ENCODE measurements at regions of chr7 and their contacts with region 1.

Region 1: DNA sequence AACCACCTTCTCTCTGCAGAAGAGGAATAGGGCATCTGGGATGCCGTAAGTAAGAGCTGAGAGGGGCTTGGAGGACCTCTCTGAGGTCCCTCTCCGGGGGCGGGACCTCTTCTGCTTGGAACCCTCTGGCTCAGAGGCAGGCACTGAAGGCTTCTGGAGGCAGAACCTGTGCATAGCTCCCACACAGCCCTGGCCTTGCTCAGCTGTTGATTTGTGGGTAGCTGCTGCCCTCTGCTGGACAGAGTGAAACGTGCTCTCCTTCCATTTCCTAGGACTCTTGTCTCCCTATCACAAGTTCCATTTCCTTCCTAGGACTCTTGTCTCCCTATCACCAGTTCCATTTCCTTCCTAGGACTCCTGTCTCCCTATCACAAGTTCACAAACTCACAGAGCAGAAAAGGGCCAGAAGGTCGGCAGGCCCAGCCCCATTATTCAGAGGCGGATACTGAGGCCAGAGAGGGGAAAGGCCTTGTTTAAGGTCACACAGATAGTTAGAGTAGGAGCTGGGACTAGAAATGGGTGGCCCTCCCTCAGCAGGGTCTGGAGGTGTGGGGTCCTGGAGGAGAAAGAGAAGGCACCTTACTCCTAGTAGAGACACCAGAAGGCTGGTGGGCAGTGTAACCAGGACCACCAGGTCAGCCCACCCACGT is 30.3 kb upstream of the GARS1 start:
- DNase-seq: peak; percentile 78 to 90
- H3K4me3 ChIP-seq: no peak overlapping the region
- H3K27ac ChIP-seq: no peak overlapping the region
- H3K4me1 ChIP-seq: peaks cover 2 to 7% (median 5%) of the 10 kb centered on the region in 4 experiments; a peak in 5 of 7 replicates
- H3K27me3 ChIP-seq: no peaks in the 10 kb centered on the region
- CTCF ChIP-seq: peak; percentile 79 to 97 (median 90)
- EP300 ChIP-seq: no peak
- POLR2A ChIP-seq: no peak
- RAD21 ChIP-seq: peak; percentile 97 to 99

Region 2: GRCh38 chr7:30276203-30276900 is 288.0 kb before region 1 on chr7:
- CTCF ChIA-PET with region 1: interaction called, 82 read pairs
- POLR2A ChIA-PET with region 1: interaction called, 4 read pairs
- DNase-seq: peak; percentile 15 to 63
- H3K4me3 ChIP-seq: no peak overlapping the region
- H3K27ac ChIP-seq: no peak overlapping the region
- H3K4me1 ChIP-seq: peaks cover 0 to 1% (median 0%) of the 10 kb centered on the region in 4 experiments; a peak in 1 of 7 replicates
- H3K27me3 ChIP-seq: no peaks in the 10 kb centered on the region
- CTCF ChIP-seq: peak; percentile 58 to 89 (median 87)
- EP300 ChIP-seq: no peak
- POLR2A ChIP-seq: no peak
- RAD21 ChIP-seq: peak; percentile 95 to 96

Region 3: DNA sequence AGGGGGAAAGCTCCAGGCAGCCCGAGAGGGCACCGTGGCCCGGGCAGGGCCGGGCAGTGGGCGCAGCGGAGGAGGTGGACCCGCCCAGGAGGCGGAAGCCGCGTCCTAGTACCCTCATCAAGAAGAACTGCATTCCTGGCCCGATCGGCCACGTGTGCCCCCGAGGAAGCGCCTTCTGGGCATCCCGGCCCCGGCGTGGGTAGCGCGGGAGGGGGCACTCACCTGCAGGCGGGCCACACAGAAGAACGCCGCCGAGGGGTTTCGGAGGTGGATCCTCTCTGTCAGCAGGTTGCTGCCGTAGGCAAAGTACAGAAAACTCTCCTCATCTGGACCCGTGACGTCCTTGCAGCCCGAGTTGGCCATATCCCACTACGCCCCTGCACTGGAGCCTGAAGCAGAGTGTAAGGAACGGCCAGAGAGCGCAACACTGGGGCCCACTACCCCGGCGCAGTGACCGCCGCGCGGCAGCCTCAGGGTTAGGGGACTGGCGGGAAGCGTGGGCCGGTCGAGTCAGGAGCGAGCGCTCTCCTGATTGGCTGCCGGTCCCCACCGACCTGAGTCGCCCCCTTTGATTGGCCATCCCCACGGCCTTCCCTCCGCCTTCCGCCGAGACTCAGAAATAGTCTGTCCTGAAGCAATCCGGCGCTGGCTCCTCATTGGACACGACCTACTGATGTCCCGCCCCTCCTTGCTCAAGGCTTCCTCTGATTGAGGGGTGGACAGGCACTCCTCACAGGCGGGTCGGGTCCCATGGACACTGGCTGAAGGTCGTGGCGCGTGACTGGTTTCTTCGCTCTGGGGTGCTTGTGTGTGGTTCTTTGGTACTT is 59.8 kb before region 1 on chr7 and contains the start of gene GGCT:
- CTCF ChIA-PET with region 1: interaction called, 63 read pairs
- POLR2A ChIA-PET with region 1: no interaction called
- DNase-seq: peak; percentile 94 to 95
- H3K4me3 ChIP-seq: peak within 1 kb of the TSS; percentile 85 to 95 (median 90)
- H3K27ac ChIP-seq: peak within 1 kb of the TSS; percentile 86
- H3K4me1 ChIP-seq: peaks cover 0 to 6% (median 3%) of the 10 kb centered on the region in 4 experiments; a peak in 4 of 7 replicates
- H3K27me3 ChIP-seq: no peaks in the 10 kb centered on the region
- CTCF ChIP-seq: no peak
- EP300 ChIP-seq: no peak
- POLR2A ChIP-seq: peak; percentile 88 to 93
- RAD21 ChIP-seq: no peak
- total RNA-seq, gene GGCT: 125 and 129 TPM in 2 replicates

Region 4: GRCh38 chr7:30515761-30516160 is 48.6 kb before region 1 on chr7:
- CTCF ChIA-PET with region 1: interaction called, 63 read pairs
- POLR2A ChIA-PET with region 1: interaction called, 6 read pairs
- DNase-seq: no peak
- H3K4me3 ChIP-seq: no peak overlapping the region
- H3K27ac ChIP-seq: no peak overlapping the region
- H3K4me1 ChIP-seq: no peaks in the 10 kb centered on the region
- H3K27me3 ChIP-seq: no peaks in the 10 kb centered on the region
- CTCF ChIP-seq: no peak
- EP300 ChIP-seq: no peak
- POLR2A ChIP-seq: no peak
- RAD21 ChIP-seq: no peak

Region 5: DNA sequence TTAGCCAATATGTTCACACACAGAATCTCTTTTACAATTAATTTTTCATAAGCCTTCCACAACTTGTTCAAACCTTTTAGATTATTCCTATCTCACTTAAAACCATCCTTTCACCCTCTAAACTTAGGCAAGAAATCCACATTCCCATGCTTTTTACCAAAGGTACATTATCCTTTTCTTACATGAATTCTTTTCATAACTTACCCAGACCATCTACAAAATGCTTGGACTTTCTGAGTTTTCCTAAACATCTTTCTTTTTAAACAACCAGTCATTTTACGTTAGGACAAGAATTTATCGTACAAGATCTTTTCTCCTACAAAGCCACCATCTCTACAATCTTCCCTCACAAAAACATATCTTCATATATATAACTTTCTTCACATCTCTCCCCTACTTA is 11.5 kb after region 1 on chr7:
- CTCF ChIA-PET with region 1: interaction called, 22 read pairs
- POLR2A ChIA-PET with region 1: interaction called, 5 read pairs
- DNase-seq: no peak
- H3K4me3 ChIP-seq: no peak overlapping the region
- H3K27ac ChIP-seq: no peak overlapping the region
- H3K4me1 ChIP-seq: no peaks in the 10 kb centered on the region
- H3K27me3 ChIP-seq: no peaks in the 10 kb centered on the region
- CTCF ChIP-seq: no peak
- EP300 ChIP-seq: no peak
- POLR2A ChIP-seq: no peak
- RAD21 ChIP-seq: no peak

Region 6: DNA sequence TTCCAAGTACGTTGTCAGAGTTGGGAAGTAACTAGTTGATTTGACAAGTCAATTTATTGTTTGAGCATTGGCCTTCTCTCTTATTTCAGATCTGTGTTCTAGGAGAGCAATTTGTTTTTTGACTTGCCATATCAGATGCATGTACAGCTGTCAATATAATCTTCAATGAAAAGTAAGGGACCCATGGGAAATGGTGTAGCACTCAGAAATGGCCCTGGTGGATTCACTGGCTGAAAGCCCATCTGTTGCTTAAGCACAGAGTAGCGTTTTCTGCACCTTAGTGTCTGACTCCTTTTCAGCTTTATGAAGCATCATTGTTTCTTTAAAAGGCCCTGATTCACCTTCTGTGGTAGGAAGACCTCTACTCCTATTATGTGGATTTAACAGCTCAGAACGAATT is 40.5 kb after region 1 on chr7:
- CTCF ChIA-PET with region 1: no interaction called
- POLR2A ChIA-PET with region 1: no interaction called
- DNase-seq: no peak
- H3K4me3 ChIP-seq: no peak overlapping the region
- H3K27ac ChIP-seq: no peak overlapping the region
- H3K4me1 ChIP-seq: no peaks in the 10 kb centered on the region
- H3K27me3 ChIP-seq: no peaks in the 10 kb centered on the region
- CTCF ChIP-seq: no peak
- EP300 ChIP-seq: no peak
- POLR2A ChIP-seq: no peak
- RAD21 ChIP-seq: no peak